ENCODE measurements at regions of chr14 and their contacts with region 1.

Region 1: DNA sequence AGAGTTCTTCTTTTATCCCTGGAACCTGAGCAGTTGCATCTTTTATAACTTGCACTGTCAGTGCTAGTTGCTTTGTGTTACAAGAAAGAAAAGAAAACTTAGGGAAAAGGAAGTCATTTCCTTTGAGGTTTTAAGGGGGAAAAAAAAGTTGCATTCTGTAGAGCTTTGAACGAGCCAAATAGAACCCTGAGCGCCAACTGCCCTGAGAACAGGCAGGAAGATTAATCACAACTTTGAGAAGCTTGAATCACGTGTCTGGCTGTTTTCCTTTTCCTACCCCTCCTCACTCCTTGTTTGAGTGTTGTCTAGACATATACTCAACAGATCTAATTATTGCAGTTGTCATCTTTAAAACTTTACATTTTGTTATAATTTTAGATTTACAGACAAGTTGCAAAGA is 12.5 kb downstream of the PCNX1 start:
- DNase-seq: no peak
- H3K4me3 Mint-ChIP-seq: peak overlapping the region; percentile 7
- H3K27ac Mint-ChIP-seq: no peak overlapping the region
- H3K4me1 Mint-ChIP-seq: peaks cover 69% of the 10 kb centered on the region
- H3K27me3 Mint-ChIP-seq: no peaks in the 10 kb centered on the region

Region 2: DNA sequence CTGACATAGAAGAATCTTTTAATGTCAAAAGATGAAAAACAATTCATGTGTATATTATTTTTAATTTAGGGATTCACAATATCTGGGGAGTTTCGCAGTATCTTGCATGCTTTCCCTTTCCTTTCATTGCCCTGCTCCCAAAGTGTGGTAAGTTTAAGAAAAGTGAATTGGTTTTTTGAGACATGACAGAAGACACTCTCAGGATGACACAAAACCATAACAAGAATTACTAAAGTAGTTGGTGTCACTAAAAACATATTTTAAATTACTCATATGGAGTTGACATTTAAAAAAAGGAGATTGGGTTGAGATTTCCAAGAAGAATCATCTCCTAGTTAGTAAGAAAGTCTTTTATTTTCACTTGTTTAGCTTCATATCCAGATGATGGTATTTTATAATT is 17.6 kb before region 1 on chr14:
- intact Hi-C with region 1: loop called (anchors 2 kb)
- DNase-seq: no peak
- H3K4me3 Mint-ChIP-seq: no peak overlapping the region
- H3K27ac Mint-ChIP-seq: peak overlapping the region; percentile 53
- H3K4me1 Mint-ChIP-seq: peaks cover 62% of the 10 kb centered on the region
- H3K27me3 Mint-ChIP-seq: no peaks in the 10 kb centered on the region

Region 3: GRCh38 chr14:70934502-70935134 is 14.8 kb after region 1 on chr14:
- intact Hi-C with region 1: loop called (anchors 2 kb)
- DNase-seq: no peak
- H3K4me3 Mint-ChIP-seq: peak overlapping the region; percentile 60
- H3K27ac Mint-ChIP-seq: peak overlapping the region; percentile 87
- H3K4me1 Mint-ChIP-seq: peaks cover 50% of the 10 kb centered on the region
- H3K27me3 Mint-ChIP-seq: no peaks in the 10 kb centered on the region

Region 4: GRCh38 chr14:70955543-70956480 is 36.0 kb after region 1 on chr14:
- intact Hi-C with region 1: loop called (anchors 2 kb)
- DNase-seq: no peak
- H3K4me3 Mint-ChIP-seq: no peak overlapping the region
- H3K27ac Mint-ChIP-seq: no peak overlapping the region
- H3K4me1 Mint-ChIP-seq: peaks cover 30% of the 10 kb centered on the region
- H3K27me3 Mint-ChIP-seq: no peaks in the 10 kb centered on the region

Region 5: DNA sequence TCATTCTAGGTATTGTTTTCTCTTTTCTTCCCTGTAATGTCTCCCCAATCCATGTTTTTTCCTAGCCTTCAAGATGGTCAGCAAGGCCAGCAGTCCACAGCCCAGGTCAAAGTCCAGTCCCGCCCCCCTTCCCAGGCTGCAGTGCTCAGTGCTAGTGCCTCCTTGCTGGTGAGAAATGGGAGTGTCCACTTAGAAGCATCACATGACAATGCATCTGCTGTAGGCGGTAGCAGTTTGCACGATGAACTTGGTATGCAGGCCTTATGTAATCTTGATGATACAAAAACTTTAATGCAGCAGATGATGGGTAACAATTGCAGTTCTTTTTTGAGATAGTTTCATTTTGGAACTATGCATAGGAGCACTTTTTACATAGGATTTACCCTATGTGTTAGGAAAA is 75.9 kb after region 1 on chr14:
- intact Hi-C with region 1: no loop called
- DNase-seq: no peak
- H3K4me3 Mint-ChIP-seq: no peak overlapping the region
- H3K27ac Mint-ChIP-seq: no peak overlapping the region
- H3K4me1 Mint-ChIP-seq: peaks cover 32% of the 10 kb centered on the region
- H3K27me3 Mint-ChIP-seq: no peaks in the 10 kb centered on the region